Sigmoid colon (tissue), 7 donors: ENCODE measurements at regions of chr3 and their contacts with region 1.

Region 1: DNA sequence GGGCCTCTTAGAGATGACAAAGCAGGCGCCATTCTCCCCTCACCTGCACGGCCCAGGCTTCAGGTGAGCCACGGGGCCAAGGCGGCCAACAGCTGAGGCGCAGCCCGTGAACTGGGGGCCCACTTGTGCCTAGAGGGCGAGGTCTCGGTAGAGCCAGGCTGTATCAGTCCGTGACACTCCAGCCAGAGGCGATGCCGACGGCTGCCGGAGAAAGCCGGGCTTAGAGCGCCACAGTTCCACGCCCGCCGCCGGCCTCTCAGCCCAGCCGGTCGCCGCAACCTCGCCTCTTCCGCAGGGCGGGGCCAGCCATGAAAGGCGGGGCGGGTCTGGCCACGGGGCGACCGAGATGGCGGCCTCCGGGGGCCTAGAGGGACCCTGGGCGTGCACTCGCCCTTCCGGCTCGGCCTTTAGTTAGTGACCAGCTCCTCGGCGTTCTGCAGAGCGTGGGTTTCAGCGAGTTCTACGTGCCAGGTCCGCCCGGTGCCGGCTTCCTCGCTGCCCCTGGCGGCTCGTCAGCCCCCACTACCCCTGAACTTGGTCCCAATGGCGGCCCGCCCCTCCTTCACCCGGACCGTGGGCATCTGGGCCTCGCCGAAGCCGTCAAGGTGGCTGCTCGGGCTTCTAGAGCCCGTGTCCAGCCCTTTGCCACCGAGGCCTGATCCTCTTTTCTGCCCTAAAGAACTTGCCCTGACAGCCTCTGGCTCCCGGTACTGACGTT is at the start of gene ZNF621:
- DNase-seq: peak; percentile 94
- H3K4me3 ChIP-seq: peak within 1 kb of the TSS; percentile 64 to 88 (median 71)
- H3K27ac ChIP-seq: peak within 1 kb of the TSS; percentile 79 to 91 (median 86)
- H3K4me1 ChIP-seq: peaks cover 0 to 24% (median 10%) of the 10 kb centered on the region in 4 donors
- H3K27me3 ChIP-seq: no peaks in the 10 kb centered on the region
- CTCF ChIP-seq: no peak
- EP300 ChIP-seq: no peak
- POLR2A ChIP-seq: peak; percentile 64 to 85
- total RNA-seq, gene ZNF621: 13.2 to 19.9 (median 17.2) TPM

Region 2: GRCh38 chr3:40309418-40309924 is 215.3 kb before region 1 on chr3 and contains the start of gene EIF1B:
- intact Hi-C with region 1: loop called (anchors 2 kb)
- DNase-seq: peak; percentile 99
- H3K4me3 ChIP-seq: peak within 1 kb of the TSS; percentile 75 to 95 (median 90)
- H3K27ac ChIP-seq: peak within 1 kb of the TSS; percentile 90 to 99 (median 98)
- H3K4me1 ChIP-seq: peaks cover 0 to 34% (median 29%) of the 10 kb centered on the region in 4 donors
- H3K27me3 ChIP-seq: no peaks in the 10 kb centered on the region
- CTCF ChIP-seq: peak; percentile 61 to 84 (median 76)
- EP300 ChIP-seq: peak in 1 of 4 donors; percentile 30
- POLR2A ChIP-seq: peak; percentile 76 to 92
- total RNA-seq, gene EIF1B: 27.1 to 42.8 (median 39.5) TPM

Region 3: GRCh38 chr3:40445062-40445461 is 79.7 kb before region 1 on chr3:
- intact Hi-C with region 1: no loop called
- DNase-seq: no peak
- H3K4me3 ChIP-seq: no peak overlapping the region
- H3K27ac ChIP-seq: no peak overlapping the region
- H3K4me1 ChIP-seq: no peaks in the 10 kb centered on the region
- H3K27me3 ChIP-seq: no peaks in the 10 kb centered on the region
- CTCF ChIP-seq: no peak
- EP300 ChIP-seq: no peak
- POLR2A ChIP-seq: no peak

Region 4: GRCh38 chr3:40476478-40477470 is 48.0 kb before region 1 on chr3 and contains the start of gene ZNF619:
- intact Hi-C with region 1: loop called (anchors 1 kb)
- DNase-seq: peak; percentile 89
- H3K4me3 ChIP-seq: peak within 1 kb of the TSS; percentile 62 to 83 (median 72)
- H3K27ac ChIP-seq: peak within 1 kb of the TSS; percentile 65 to 74 (median 71)
- H3K4me1 ChIP-seq: peaks cover 0 to 11% (median 6%) of the 10 kb centered on the region in 4 donors
- H3K27me3 ChIP-seq: no peaks in the 10 kb centered on the region
- CTCF ChIP-seq: no peak
- EP300 ChIP-seq: no peak
- POLR2A ChIP-seq: no peak
- total RNA-seq, gene ZNF619: 3.4 to 5.1 (median 4.5) TPM

Region 5: DNA sequence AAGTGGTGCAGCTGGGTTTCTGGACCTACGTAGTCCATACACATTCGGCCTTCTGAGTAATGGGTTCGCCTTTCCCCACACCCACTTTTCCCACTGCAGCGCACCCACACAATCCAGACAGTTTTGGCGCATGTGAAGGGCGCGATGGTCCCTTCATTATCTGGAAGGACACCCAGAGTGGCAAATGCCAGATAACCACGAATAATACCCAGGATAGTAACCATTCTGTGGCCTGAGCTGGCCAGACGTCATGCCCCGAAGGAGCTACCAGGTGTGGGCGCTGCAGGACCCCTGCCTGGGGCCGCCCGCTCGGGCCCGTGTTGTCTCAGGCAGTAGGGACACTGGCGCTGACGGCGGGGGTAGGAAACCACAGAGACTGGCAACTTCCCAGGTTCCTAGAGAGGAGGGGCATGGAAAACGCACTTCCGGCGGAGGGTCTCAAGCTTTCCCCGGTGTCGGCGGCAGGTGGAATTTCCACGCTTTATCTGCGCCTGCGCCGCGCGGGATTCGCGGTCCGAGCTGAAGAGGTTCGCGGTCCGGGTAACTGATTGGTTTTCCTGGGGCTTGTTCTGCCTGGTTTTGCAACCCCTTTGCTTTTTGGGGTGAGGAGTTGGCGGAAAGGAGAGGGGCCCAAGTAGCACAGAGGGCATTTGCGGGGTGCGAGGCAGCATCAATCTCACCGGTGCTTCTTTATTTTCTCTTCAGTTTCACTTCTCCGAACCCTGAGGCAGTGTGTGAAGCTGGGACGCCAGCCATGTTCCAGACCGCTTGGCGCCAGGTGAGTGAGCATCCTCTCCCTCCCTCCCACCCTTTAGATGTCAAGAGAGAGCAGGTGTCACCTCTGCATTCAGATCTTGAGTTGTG is 18.9 kb before region 1 on chr3 and contains the start of gene ZNF620:
- intact Hi-C with region 1: loop called (anchors 2 kb)
- DNase-seq: peak; percentile 91
- H3K4me3 ChIP-seq: peak within 1 kb of the TSS; percentile 56 to 72 (median 66)
- H3K27ac ChIP-seq: peak within 1 kb of the TSS; percentile 78 to 80 (median 78)
- H3K4me1 ChIP-seq: peaks cover 0 to 12% (median 4%) of the 10 kb centered on the region in 4 donors
- H3K27me3 ChIP-seq: no peaks in the 10 kb centered on the region
- CTCF ChIP-seq: no peak
- EP300 ChIP-seq: no peak
- POLR2A ChIP-seq: peak; percentile 25 to 33
- total RNA-seq, gene ZNF620: 1.4 to 7.3 (median 4.1) TPM